Activated naive CD8-positive, alpha-beta T cell treated with anti-CD3 and anti-CD28 coated beads, Interleukin-2, amount 10 ng/mL, durations not matched to agents 7 days and 5 days (primary cell): ENCODE measurements at regions of chr15 and their contacts with region 1.

Region 1: GRCh38 chr15:40769274-40770146 is at the start of gene C15orf62:
- DNase-seq: peak; percentile 64
- ATAC-seq: peak; percentile 67
- H3K4me3 Mint-ChIP-seq: peak within 1 kb of the TSS; percentile 58
- H3K27ac Mint-ChIP-seq: peak within 1 kb of the TSS; percentile 89
- H3K4me1 Mint-ChIP-seq: peaks cover 26% of the 10 kb centered on the region
- H3K27me3 Mint-ChIP-seq: no peaks in the 10 kb centered on the region
- total RNA-seq, gene C15orf62: 2.4 TPM

Region 2: DNA sequence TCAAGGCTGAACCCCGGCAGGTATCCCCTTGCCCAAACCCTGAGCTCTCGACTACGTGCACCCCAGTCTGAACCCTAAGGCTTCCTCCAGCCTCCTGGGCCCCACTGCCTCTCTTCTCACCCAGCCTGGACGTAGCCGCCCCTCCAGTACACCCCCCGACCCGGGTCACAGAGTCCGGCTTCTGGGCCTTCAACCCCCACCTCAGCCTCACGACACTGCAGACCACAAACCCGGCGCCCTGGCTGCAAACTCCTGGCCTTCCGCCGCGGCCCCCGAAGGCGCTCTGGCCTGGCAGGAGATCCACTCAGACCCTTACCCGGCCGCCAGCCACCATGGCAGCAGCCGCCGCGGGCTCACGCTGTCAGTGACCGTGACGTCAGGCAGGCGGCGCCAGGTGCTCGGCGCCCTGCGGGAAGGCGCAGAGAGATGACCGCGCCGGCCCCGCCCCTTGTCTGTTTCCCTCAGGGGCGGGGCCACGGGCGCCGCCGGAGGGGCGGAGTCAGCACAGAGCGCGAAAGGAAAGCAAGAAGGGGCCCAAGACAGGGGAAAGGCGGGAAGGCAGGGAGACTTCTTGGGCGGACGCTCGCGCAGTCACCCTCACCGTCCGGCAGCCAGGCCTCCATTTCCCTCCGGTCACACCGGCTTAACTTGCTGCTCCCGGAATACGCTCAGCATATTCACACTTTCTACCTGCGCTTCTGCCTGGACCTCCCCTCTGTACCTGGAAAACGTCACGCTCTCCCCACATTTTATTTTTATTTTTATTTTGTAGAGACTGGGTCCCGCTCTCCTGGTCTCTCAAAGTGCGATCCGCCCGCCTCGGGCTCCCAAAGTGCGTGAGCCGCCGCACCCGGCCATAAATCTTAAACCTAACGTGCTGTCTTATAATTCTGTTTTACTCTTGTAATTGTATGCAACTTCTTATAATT is 14.4 kb before region 1 on chr15 and contains the start of gene RMDN3:
- POLR2A ChIA-PET with region 1: interaction called, 15 read pairs
- DNase-seq: peak; percentile 99
- ATAC-seq: peak; percentile 83
- H3K4me3 Mint-ChIP-seq: peak within 1 kb of the TSS; percentile 82
- H3K27ac Mint-ChIP-seq: peak within 1 kb of the TSS; percentile 98
- H3K4me1 Mint-ChIP-seq: peaks cover 35% of the 10 kb centered on the region
- H3K27me3 Mint-ChIP-seq: peaks cover 5% of the 10 kb centered on the region
- total RNA-seq, gene RMDN3: 32.5 to 36.4 TPM